AG04449 (cell line): ENCODE measurements at regions of chr18 and their contacts with region 1.

Region 1: GRCh38 chr18:49510393-49511115 is 23.5 kb upstream of the C18orf32 start:
- DNase-seq: no peak
- H3K4me3 ChIP-seq: no peak overlapping the region
- CTCF ChIP-seq: peak; percentile 86

Region 2: DNA sequence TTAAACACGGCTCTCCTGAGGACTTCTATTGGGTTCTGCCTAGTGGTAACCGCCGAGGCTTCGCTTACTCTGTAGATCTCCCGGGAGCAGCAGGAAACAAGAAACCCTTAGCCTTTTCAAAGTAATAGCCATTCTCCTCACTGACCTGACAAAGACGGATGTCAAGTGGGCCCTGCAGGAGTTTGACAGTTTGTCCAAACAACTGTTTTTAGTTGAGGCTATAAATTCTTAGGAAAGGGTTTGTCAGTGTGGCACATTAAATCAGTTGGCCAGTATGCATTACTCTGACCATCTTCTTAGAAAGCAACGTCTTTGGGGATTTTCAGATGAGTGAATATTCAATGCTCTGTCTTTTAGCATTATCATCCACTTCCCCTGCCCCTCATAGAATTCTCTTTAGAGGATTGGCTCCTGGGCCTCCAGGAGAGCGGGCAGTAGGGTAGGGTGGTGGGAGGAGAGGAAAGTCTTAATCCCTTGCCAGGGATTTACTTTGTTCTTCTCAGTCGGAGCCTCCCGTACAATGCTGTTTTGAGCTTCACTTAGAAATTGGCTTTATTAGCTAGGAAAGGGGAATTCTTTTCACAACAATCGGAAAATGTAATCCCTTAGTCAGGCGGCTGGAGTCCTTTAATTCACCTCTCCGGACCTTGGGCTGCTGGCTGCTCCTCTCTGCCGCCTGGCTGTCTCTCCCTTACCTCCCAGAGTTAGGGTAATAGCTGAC is 10.2 kb before region 1 on chr18:
- CTCF ChIA-PET with region 1: interaction called, 36 read pairs
- POLR2A ChIA-PET with region 1: no interaction called
- DNase-seq: no peak
- H3K4me3 ChIP-seq: no peak overlapping the region
- CTCF ChIP-seq: no peak

Region 3: GRCh38 chr18:49561289-49562193 is 51.0 kb after region 1 on chr18 and contains the start of gene LIPG:
- CTCF ChIA-PET with region 1: interaction called, 19 read pairs
- POLR2A ChIA-PET with region 1: no interaction called
- DNase-seq: no peak
- H3K4me3 ChIP-seq: peak within 1 kb of the TSS; percentile 46
- CTCF ChIP-seq: no peak

Region 4: DNA sequence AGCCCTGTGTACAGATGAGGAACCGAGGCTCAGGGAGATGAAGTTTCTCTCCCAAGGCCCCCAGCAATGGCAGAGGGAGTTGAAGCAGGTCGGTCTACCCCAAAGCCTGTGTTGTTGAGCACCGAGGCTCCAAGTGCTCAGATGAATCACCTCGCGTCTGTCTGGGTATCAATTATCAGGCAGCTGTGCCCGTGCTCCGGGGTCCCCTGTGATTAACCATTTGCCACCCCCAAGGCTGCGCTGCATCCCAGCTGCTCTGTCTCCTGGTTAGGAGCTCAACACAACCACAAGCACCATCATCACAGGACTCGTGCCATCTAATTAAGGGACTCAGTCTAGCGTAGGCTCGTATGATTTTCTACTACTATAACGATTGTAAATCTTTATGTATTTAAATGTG is 78.4 kb after region 1 on chr18:
- CTCF ChIA-PET with region 1: no interaction called
- POLR2A ChIA-PET with region 1: no interaction called
- DNase-seq: no peak
- H3K4me3 ChIP-seq: no peak overlapping the region
- CTCF ChIP-seq: no peak

Region 5: GRCh38 chr18:49668574-49669275 is 158.2 kb after region 1 on chr18:
- CTCF ChIA-PET with region 1: no interaction called
- POLR2A ChIA-PET with region 1: no interaction called
- DNase-seq: no peak
- H3K4me3 ChIP-seq: no peak overlapping the region
- CTCF ChIP-seq: no peak

Region 6: DNA sequence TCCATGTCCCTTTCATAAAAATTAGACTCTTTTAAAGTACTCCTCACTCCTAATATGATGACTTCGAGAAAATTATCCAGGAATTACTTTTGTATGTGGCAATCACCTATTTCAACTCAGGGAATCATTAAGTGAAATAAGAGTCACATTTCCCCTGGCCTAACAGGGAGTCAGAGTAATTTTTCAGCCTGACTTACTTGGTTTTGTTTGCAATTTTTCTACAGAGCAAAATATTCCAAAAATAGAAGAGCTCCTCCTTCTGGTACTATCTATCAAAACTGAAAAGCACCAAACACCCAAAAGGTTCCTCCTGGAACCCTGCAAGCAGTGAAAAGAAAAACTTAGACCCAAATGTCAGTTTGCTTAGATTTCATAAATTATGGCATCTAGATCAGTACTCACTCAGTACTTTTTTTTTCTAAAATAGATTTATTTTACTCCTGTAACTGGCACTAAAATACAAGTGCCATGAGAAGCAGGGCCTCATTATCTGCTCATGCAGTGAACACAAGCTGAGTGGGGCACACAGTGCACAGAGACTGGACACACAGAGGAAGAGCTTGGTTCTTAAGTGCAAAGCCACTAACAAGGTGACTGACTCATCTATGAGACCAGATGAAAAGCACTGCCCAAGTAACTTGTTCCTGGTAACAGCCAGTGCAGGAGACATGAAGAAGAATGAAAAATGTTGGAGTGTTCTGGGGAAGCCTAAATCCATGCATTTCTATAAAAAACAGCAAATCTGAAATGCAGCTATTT is 274.1 kb after region 1 on chr18:
- CTCF ChIA-PET with region 1: interaction called, 40 read pairs
- POLR2A ChIA-PET with region 1: no interaction called
- DNase-seq: no peak
- H3K4me3 ChIP-seq: no peak overlapping the region
- CTCF ChIP-seq: no peak

Region 7: GRCh38 chr18:50356036-50356945 is 845.7 kb after region 1 on chr18:
- CTCF ChIA-PET with region 1: interaction called, 15 read pairs
- POLR2A ChIA-PET with region 1: no interaction called
- DNase-seq: no peak
- H3K4me3 ChIP-seq: no peak overlapping the region
- CTCF ChIP-seq: no peak